ENCODE measurements at regions of chr13 and their contacts with region 1.

Region 1: DNA sequence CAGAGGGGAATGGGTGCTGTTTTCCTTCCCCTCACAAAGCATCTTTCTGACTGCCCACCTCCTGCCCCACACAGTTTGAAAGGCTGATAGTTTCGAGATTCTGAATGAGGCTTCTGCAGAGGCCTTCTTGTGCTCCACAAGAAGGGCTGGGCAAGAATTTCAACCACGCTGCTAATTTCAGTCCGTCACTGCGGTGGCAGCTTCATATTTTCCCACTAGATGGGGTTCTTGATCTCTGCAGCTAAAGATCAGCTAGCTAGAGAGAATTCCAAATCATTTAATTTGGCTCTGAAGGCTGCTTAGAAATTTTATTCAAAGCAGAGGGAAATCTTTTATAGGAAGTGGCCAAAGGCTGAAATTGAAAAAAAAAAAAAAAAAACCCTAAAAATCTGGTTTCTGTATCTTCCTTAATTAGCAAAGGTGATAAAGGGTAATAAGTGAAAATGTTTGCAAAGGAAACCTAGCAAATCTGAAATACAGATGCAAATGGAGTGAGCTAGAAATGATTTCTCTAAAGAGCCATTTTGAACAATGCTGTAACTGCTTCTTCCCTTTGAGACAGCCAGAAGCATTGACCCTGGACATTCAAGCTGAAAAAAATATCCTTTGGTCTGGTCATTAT is 38.0 kb upstream of the C13orf42 start:
- DNase-seq: peak; percentile 78
- H3K4me3 ChIP-seq: no peak overlapping the region
- H3K27ac ChIP-seq: no peak overlapping the region
- H3K4me1 ChIP-seq: peaks cover 11% of the 10 kb centered on the region
- H3K27me3 ChIP-seq: no peaks in the 10 kb centered on the region
- CTCF ChIP-seq: peak; percentile 60 to 68
- POLR2A ChIP-seq: no peak

Region 2: DNA sequence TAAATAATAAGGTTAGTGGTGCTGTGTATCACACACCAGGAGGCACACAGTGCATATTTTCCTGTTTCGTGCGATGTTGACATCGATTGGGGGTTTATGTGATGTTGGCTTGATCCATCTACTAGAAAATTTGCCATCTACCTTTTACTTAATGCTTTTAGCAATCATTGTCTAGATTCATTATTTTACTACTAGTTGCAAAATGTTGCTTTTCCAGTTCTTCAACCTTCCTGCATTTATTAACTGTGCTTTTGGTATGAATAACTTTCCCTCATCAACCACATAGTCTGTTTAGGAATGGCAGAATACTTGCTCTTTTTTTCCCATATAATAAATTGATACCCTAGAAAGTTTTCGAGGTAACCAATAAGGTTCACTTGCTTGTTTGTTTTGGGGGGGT is 55.5 kb before region 1 on chr13:
- CTCF ChIA-PET with region 1: no interaction called
- POLR2A ChIA-PET with region 1: no interaction called
- dilution Hi-C with region 1: no loop called
- intact Hi-C with region 1: no loop called
- DNase-seq: no peak
- H3K4me3 ChIP-seq: no peak overlapping the region
- H3K27ac ChIP-seq: no peak overlapping the region
- H3K4me1 ChIP-seq: no peaks in the 10 kb centered on the region
- H3K27me3 ChIP-seq: peaks cover 9 to 11% of the 10 kb centered on the region in 2 experiments
- CTCF ChIP-seq: no peak
- POLR2A ChIP-seq: no peak

Region 3: GRCh38 chr13:51202477-51203046 is 53.5 kb after region 1 on chr13:
- CTCF ChIA-PET with region 1: interaction called, 3 read pairs
- POLR2A ChIA-PET with region 1: no interaction called
- dilution Hi-C with region 1: no loop called
- intact Hi-C with region 1: loop called (anchors 2 kb)
- DNase-seq: peak; percentile 73
- H3K4me3 ChIP-seq: no peak overlapping the region
- H3K27ac ChIP-seq: peak overlapping the region; percentile 82
- H3K4me1 ChIP-seq: peaks cover 16% of the 10 kb centered on the region
- H3K27me3 ChIP-seq: no peaks in the 10 kb centered on the region
- CTCF ChIP-seq: no peak
- POLR2A ChIP-seq: no peak

Region 4: DNA sequence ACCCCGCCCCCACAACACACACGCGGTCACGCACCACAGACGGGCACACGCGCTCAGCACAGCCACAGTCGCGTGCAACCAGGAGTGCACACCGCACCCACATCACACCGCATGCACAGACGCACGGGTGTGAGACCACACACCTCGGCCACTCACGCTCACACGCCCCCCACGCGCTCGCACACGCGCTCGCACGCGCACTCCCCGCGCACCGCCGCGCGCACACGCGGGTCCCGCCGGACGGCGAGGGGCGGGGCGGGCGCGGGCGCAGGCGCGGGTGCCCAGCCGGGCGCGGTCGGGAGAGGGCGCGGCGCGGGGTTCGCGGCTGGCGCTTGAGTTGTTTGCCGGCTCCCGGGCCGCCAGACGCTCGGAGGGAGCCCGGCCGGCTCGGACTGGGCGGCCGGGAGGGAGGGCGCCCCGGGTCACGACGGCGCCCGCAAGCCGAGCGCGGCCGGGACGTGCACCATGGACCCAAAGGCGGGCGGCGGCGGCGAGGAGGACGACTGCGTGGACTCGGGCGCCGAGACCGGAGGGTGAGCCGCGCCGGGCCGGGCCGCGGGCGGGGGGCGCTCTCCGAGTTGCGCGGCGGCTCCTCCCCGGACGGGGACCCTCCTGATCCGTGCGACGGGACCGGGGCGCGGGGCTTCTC is 73.1 kb after region 1 on chr13 and contains the start of gene FAM124A:
- CTCF ChIA-PET with region 1: interaction called, 18 read pairs
- POLR2A ChIA-PET with region 1: no interaction called
- dilution Hi-C with region 1: no loop called
- intact Hi-C with region 1: loop called (anchors 2 kb)
- DNase-seq: peak; percentile 36
- H3K4me3 ChIP-seq: peak within 1 kb of the TSS; percentile 29 to 64 (median 46)
- H3K27ac ChIP-seq: no peak within 1 kb of the TSS
- H3K4me1 ChIP-seq: peaks cover 7% of the 10 kb centered on the region
- H3K27me3 ChIP-seq: no peaks in the 10 kb centered on the region
- CTCF ChIP-seq: peak in 1 of 2 donors; percentile 37
- POLR2A ChIP-seq: peak; percentile 32
- total RNA-seq, gene FAM124A: 7.4 and 9.9 TPM in 2 replicates

Region 5: DNA sequence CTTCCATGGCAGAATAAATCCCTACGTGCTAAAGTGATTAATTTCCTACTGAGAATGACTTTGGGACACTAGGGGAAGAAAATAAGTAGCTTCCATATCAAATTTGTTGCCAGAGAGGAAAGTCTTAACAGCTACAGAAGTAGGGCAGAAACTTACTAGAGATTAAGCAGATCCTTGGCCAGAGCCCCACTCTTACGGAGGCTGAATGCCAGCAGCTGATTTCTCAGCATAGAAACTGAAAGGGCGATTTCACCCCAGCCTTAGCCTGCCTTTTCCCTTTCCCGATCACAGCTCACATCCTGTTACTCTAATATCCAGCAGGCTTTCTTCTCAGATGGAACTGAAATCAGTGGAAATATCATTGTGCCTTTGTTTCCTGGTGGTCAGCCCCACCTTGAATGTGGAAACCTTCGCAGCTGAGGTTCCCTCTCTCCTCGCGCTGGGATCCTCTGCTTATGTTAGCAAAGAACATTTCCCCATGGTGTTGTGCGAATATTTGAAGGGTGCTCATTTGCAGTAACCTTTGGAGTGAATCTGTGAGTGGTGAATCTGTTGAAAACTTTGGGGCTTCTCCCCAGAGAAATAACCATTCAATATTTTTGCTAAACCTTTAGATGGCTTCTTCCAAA is 81.5 kb after region 1 on chr13:
- CTCF ChIA-PET with region 1: interaction called, 17 read pairs
- POLR2A ChIA-PET with region 1: no interaction called
- dilution Hi-C with region 1: no loop called
- intact Hi-C with region 1: no loop called
- DNase-seq: peak; percentile 87
- H3K4me3 ChIP-seq: peak overlapping the region; percentile 25 to 66 (median 35)
- H3K27ac ChIP-seq: peak overlapping the region; percentile 28
- H3K4me1 ChIP-seq: peaks cover 26% of the 10 kb centered on the region
- H3K27me3 ChIP-seq: no peaks in the 10 kb centered on the region
- CTCF ChIP-seq: no peak
- POLR2A ChIP-seq: no peak

Region 6: GRCh38 chr13:51797664-51798488 is 648.8 kb after region 1 on chr13:
- CTCF ChIA-PET with region 1: interaction called, 18 read pairs
- POLR2A ChIA-PET with region 1: no interaction called
- dilution Hi-C with region 1: no loop called
- intact Hi-C with region 1: loop called (anchors 5 kb)
- DNase-seq: peak; percentile 36
- H3K4me3 ChIP-seq: no peak overlapping the region
- H3K27ac ChIP-seq: no peak overlapping the region
- H3K4me1 ChIP-seq: peaks cover 24% of the 10 kb centered on the region
- H3K27me3 ChIP-seq: no peaks in the 10 kb centered on the region
- CTCF ChIP-seq: peak; percentile 16 to 27
- POLR2A ChIP-seq: no peak

Region 7: DNA sequence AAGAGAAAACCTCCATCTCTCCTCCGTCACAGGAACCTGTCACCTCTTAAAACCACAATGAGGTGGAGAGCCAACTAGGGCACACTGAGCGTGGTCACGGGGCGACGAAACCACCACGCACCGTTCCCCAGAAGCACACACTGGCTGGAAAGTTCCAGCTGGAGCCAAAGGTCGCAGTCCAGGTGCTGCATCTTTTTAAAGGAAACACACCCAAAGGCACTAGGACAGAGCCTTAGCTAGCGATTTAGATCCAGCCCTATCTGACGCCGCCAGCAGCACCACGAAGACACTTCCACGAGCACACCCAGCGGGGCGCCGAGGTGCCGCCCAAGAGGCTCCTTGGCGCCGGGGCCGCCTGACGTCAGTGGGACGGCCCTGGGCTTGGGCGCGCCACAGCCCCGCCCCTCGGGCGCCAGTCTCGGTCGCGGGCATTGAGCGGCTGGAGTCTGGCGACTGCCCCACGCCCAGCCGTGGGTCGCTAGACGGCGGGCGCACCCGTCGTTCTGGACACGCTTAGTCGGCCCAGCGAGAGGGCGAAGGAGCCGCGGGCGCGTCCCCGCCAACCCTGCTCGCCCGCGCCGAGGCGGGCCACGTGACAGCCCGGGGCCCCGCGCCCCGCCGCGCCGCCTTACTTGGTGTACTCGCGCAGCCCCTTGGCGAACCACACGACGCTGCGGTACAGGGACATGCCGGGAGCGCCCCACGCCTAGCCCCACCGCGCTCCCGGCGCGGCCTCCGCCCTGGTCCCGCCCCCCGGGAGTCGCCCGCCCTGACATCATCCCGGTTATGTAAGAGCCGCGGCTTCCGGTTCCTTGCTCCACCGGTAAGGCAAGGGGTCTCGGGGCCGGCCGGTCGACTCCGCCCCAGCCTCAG is 654.6 kb after region 1 on chr13 and contains the start of gene DHRS12:
- CTCF ChIA-PET with region 1: interaction called, 3 read pairs
- POLR2A ChIA-PET with region 1: no interaction called
- dilution Hi-C with region 1: no loop called
- intact Hi-C with region 1: loop called (anchors 5 kb)
- DNase-seq: peak; percentile 75
- H3K4me3 ChIP-seq: peak within 1 kb of the TSS; percentile 62 to 72 (median 71)
- H3K27ac ChIP-seq: peak within 1 kb of the TSS; percentile 92
- H3K4me1 ChIP-seq: peaks cover 35% of the 10 kb centered on the region
- H3K27me3 ChIP-seq: no peaks in the 10 kb centered on the region
- CTCF ChIP-seq: no peak
- POLR2A ChIP-seq: peak; percentile 77
- total RNA-seq, gene DHRS12: 6.4 and 8.9 TPM in 2 replicates

Measured in endothelial cell of umbilical vein (primary cell).